Activated B cell treated with CpG ODN at 0.5 μM for 24 hours (primary cell): ENCODE measurements at regions of chr19 and their contacts with region 1.

Region 1: DNA sequence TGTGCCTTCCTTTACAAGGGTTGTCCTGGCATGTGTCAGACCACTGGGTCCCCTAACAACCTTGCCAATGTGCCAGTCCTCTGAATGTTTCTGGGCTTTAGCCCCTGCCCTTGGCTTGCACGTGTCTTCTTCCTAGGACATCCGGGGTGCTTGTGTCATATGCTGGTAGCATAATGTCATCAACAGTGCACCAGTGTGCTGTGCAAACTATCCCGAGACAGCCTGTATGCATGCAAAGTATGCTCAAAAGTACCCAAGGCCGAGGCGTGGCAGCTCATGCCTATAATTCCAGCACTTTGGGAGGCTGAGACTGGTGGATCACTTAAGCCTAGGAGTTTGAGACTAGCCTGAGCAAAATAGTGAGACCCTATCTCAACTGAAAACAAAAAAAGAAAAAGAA is 20.7 kb upstream of the C19orf12 start:
- DNase-seq: no peak
- ATAC-seq: no peak
- H3K4me3 Mint-ChIP-seq: no peak overlapping the region
- H3K27ac Mint-ChIP-seq: no peak overlapping the region
- H3K4me1 Mint-ChIP-seq: no peaks in the 10 kb centered on the region
- H3K27me3 Mint-ChIP-seq: peaks cover 17% of the 10 kb centered on the region
- CTCF ChIP-seq: no peak

Region 2: DNA sequence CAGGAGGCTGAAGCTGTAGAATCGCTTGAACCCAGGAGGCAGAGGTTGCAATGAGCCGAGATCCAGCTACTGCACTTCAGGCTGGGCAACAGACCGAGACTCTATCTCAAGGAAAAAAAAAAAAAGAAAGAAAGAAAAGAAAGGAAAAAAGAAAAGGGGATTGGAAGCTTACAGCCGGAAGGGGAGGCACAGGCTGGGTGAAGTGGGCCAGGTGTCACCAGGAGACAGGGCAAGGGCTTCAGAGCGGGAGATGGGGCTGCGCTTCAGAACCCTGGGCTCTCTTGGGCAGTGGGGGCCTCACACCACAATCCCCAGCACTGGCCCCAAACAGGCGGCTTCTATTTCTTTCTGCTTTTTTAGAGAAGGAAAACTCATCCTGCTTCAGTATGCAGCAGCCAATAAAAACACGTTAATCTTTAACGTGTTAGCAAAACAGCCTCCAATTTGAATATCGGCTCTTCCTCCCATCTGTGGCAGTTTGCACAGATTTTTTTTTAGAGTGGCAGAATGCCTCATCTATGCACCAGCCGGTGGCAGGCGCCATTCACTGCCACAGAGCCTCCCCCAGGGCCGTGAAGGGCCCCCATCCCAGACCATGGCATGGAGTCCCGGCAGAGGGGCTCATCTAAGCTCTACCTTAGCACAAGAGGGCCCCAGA is 25.9 kb after region 1 on chr19:
- CTCF ChIA-PET with region 1: interaction called, 10 read pairs
- POLR2A ChIA-PET with region 1: no interaction called
- intact Hi-C with region 1: loop called (anchors 1 kb)
- DNase-seq: no peak
- ATAC-seq: no peak
- H3K4me3 Mint-ChIP-seq: no peak overlapping the region
- H3K27ac Mint-ChIP-seq: no peak overlapping the region
- H3K4me1 Mint-ChIP-seq: peaks cover 4% of the 10 kb centered on the region
- H3K27me3 Mint-ChIP-seq: peaks cover 6% of the 10 kb centered on the region
- CTCF ChIP-seq: no peak

Region 3: GRCh38 chr19:29966588-29967249 is 230.9 kb after region 1 on chr19:
- CTCF ChIA-PET with region 1: no interaction called
- POLR2A ChIA-PET with region 1: no interaction called
- intact Hi-C with region 1: loop called (anchors 2 kb)
- DNase-seq: no peak
- ATAC-seq: no peak
- H3K4me3 Mint-ChIP-seq: no peak overlapping the region
- H3K27ac Mint-ChIP-seq: no peak overlapping the region
- H3K4me1 Mint-ChIP-seq: peaks cover 70% of the 10 kb centered on the region
- H3K27me3 Mint-ChIP-seq: no peaks in the 10 kb centered on the region
- CTCF ChIP-seq: no peak